CD4-positive, alpha-beta memory T cell (primary cell): ENCODE measurements at regions of chr17 and their contacts with region 1.

Region 1: GRCh38 chr17:59004338-59005111 is 102.2 kb downstream of the TRIM37 start:
- DNase-seq: peak; percentile 57 to 68 (median 62)
- H3K4me3 ChIP-seq: no peak overlapping the region
- H3K4me3 Mint-ChIP-seq: peak overlapping the region in 2 of 8 donors; percentile 20 to 28
- H3K27ac ChIP-seq: no peak overlapping the region
- H3K27ac Mint-ChIP-seq: peak overlapping the region; percentile 49 to 91 (median 67)
- H3K4me1 ChIP-seq: peaks cover 6% of the 10 kb centered on the region
- H3K4me1 Mint-ChIP-seq: peaks cover 9 to 17% (median 13%) of the 10 kb centered on the region in 4 donors
- H3K27me3 ChIP-seq: no peaks in the 10 kb centered on the region
- H3K27me3 Mint-ChIP-seq: no peaks in the 10 kb centered on the region

Region 2: DNA sequence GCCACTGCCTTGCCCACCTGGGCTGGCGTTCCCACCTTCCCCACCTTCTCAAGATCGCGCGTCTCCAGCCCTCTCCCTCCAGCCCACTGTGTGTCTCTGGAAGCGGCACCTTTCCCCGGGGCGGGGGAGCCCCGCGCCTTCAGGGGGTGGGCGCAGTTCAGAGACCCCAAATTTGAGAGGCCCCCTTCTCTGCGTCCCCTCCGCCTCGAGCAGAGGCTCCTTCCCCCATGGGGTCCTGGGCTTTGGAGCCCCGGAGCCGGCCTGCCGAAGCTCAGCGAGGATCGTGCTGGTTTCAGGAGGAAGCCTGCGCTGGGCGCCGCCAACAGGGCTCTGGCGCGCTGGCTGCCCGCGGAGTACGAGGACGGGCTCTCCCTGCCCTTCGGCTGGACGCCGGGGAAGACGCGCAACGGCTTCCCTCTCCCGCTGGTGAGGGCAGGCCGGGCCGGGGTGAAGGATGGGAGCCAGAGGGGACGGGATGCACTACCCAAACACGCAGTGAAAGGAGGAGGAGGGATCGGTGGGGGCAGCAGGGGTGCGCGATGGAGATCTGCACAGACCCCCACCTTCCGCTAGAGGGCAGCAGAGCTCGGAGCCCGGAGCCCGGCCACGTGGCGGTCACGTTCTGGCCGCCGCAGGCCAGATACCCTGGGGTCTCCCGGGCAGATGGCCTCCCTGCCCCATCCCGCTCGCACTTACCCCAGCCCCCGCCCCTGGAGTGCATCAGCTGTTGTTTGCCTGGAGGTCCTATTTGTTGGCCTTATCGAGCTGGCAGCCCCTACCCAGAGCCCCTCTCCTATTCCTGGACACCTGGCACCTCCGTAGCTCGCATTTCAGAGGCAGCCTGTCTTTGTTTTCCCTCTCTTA is 755.0 kb before region 1 on chr17:
- CTCF ChIA-PET with region 1: interaction called, 4 read pairs
- POLR2A ChIA-PET with region 1: no interaction called
- intact Hi-C with region 1: loop called (anchors 2 kb)
- DNase-seq: peak; percentile 69 to 80 (median 73)
- H3K4me3 ChIP-seq: peak overlapping the region in 1 of 2 donors; percentile 62
- H3K4me3 Mint-ChIP-seq: peak overlapping the region; percentile 70 to 86 (median 80)
- H3K27ac ChIP-seq: no peak overlapping the region
- H3K27ac Mint-ChIP-seq: peak overlapping the region in 2 of 7 donors; percentile 2 to 18
- H3K4me1 ChIP-seq: peaks cover 11% of the 10 kb centered on the region
- H3K4me1 Mint-ChIP-seq: peaks cover 3 to 9% (median 6%) of the 10 kb centered on the region in 4 donors
- H3K27me3 ChIP-seq: no peaks in the 10 kb centered on the region
- H3K27me3 Mint-ChIP-seq: peaks cover 1 to 5% of the 10 kb centered on the region in 2 donors

Region 3: GRCh38 chr17:58577642-58578091 is 426.9 kb before region 1 on chr17:
- CTCF ChIA-PET with region 1: interaction called, 16 read pairs
- POLR2A ChIA-PET with region 1: interaction called, 3 read pairs
- intact Hi-C with region 1: loop called (anchors 1 kb)
- DNase-seq: peak; percentile 25 to 56 (median 36)
- H3K4me3 ChIP-seq: no peak overlapping the region
- H3K4me3 Mint-ChIP-seq: no peak overlapping the region
- H3K27ac ChIP-seq: no peak overlapping the region
- H3K27ac Mint-ChIP-seq: peak overlapping the region in 1 of 7 donors; percentile 19
- H3K4me1 ChIP-seq: no peaks in the 10 kb centered on the region
- H3K4me1 Mint-ChIP-seq: peaks cover 0 to 2% (median under 1%) of the 10 kb centered on the region in 4 donors
- H3K27me3 ChIP-seq: no peaks in the 10 kb centered on the region
- H3K27me3 Mint-ChIP-seq: no peaks in the 10 kb centered on the region

Region 4: DNA sequence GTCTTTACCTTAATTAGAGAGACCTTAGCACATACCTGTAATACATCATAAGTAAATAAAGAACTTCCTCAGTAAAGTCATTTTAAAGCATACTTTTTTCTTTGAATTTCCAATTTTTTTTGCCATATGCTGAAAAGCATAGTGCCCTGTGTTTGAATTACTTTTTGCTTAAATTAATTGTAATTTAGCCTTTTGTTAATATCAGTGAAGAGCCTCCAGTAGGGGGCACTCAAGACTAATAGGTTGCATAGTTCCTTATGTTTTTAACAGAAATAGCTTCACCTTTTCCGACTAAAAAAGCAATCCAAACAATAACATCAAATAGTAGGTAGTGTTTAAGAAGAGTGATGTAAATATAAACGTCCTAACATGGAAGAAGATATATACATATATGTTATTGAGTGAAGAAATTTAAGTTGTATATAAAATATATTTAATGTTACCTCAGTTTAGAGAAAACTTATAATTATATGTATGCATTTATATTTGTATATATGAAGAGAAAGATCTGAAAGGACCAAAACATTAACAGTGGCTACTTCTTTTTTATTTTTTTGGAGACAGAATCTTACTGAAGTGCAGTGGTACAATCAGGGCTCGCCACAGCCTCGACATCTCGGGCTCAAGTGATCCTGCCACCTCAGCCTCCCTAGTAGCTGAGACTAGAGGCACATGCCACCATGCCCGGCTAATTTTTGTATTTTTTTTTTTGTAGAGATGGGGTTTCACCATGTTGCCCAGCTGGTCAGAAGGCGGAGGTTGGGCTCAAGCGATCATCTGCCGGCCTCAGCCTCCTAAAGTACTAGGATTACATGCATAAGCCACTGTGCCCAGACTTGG is 293.4 kb before region 1 on chr17:
- CTCF ChIA-PET with region 1: interaction called, 21 read pairs
- POLR2A ChIA-PET with region 1: interaction called, 3 read pairs
- intact Hi-C with region 1: loop called (anchors 1 kb)
- DNase-seq: peak in 4 of 5 donors; percentile 22 to 38 (median 36)
- H3K4me3 ChIP-seq: no peak overlapping the region
- H3K4me3 Mint-ChIP-seq: no peak overlapping the region
- H3K27ac ChIP-seq: no peak overlapping the region
- H3K27ac Mint-ChIP-seq: no peak overlapping the region
- H3K4me1 ChIP-seq: no peaks in the 10 kb centered on the region
- H3K4me1 Mint-ChIP-seq: peaks cover 0 to 6% (median under 1%) of the 10 kb centered on the region in 4 donors
- H3K27me3 ChIP-seq: no peaks in the 10 kb centered on the region
- H3K27me3 Mint-ChIP-seq: no peaks in the 10 kb centered on the region

Region 5: DNA sequence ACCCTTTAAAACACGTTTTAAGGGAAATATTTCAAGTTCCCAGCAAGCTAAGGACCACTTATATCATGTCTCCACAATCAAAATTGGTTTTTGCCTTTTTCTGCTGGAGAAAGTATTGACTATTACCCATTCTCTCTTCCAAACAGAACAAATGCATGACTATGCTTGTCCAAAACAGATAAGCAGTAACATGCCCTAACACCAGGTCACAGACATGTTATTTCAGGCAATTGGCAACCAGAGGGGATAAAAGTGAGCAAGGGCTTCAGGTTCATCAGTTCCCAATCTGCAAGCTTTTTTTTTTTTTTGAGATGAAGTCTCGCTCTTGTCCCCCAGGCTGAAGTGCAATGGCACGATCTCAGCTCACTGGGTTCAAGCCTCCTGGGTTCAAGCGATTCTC is 135.4 kb after region 1 on chr17:
- CTCF ChIA-PET with region 1: no interaction called
- POLR2A ChIA-PET with region 1: no interaction called
- intact Hi-C with region 1: no loop called
- DNase-seq: no peak
- H3K4me3 ChIP-seq: no peak overlapping the region
- H3K4me3 Mint-ChIP-seq: no peak overlapping the region
- H3K27ac ChIP-seq: no peak overlapping the region
- H3K27ac Mint-ChIP-seq: no peak overlapping the region
- H3K4me1 ChIP-seq: no peaks in the 10 kb centered on the region
- H3K4me1 Mint-ChIP-seq: peaks cover 4 to 13% (median 8%) of the 10 kb centered on the region in 4 donors
- H3K27me3 ChIP-seq: no peaks in the 10 kb centered on the region
- H3K27me3 Mint-ChIP-seq: no peaks in the 10 kb centered on the region